HEK293T (cell line): ENCODE measurements at regions of chr10 and their contacts with region 1.

Region 1: GRCh38 chr10:52483587-52483986 is 169.5 kb downstream of the DKK1 start:
- DNase-seq: no peak

Region 2: GRCh38 chr10:52400564-52400963 is 83.0 kb before region 1 on chr10:
- CTCF ChIA-PET with region 1: no interaction called
- POLR2A ChIA-PET with region 1: no interaction called
- DNase-seq: no peak

Region 3: GRCh38 chr10:52541006-52541473 is 57.5 kb after region 1 on chr10:
- CTCF ChIA-PET with region 1: interaction called, 10 read pairs
- POLR2A ChIA-PET with region 1: no interaction called
- DNase-seq: no peak